ENCODE measurements at regions of chr16 and their contacts with region 1.

Region 1: DNA sequence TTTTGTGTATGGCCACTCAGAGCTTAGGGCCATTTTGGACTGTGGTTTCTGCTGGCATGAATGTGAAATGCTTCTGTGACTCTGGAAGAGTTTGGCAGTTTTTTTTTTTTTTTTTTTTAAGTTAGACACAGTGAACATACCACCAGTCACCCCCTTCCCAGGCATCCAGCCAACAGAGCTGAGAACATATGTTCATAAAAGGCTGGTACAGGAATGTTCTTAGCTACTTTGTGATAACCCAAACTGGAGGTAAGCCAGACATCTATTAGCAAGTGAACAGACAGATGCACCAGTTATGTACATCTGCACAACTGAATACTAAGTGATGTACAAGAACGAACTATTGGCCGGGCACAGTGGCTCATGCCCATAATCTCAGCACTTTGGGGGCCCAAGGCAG is 92.7 kb downstream of the ABCC1 start:
- DNase-seq: no peak
- H3K4me3 ChIP-seq: no peak overlapping the region
- H3K27ac ChIP-seq: no peak overlapping the region
- H3K4me1 ChIP-seq: no peaks in the 10 kb centered on the region
- H3K27me3 ChIP-seq: no peaks in the 10 kb centered on the region
- CTCF ChIP-seq: no peak

Region 2: DNA sequence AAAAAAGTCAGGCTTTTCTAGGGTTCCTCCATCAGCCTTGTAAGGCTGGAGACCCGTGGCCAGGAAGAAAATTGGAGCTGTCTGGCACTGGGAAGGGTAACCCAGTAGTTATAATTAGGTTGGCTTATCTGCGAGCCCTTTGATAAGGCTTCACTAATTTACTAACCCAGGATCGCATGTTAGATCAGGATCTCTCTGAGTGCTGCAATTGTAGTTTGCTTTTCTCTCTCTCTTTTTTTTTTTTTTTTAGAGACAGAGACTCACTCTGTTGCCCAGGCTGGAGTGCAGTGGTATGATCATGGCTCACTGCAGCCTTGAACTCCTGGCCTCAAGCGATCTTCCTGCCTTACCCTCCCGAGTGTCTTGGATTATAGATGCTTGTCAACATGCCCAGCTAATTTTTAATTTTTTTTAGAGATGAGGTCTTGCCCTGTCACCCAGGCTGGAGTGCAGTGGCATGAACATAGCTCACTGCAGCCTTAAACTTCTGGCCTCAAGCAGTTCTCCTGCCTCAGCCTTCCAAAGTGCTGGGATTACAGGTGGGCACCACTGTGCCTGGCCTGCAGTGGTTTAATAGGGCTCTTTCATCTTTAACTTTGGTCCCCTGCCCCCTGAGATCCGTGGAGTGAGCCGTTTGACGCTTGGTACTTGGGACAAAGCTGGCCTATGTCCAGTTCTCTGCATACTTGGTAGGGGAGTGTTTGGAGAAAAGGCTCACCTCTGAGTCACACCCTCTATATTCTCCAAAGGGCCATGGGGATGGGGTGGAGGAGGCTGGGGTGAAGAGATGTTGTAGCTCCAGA is 75.5 kb before region 1 on chr16:
- CTCF ChIA-PET with region 1: no interaction called
- dilution Hi-C with region 1: no loop called
- in situ Hi-C with region 1: no loop called
- intact Hi-C with region 1: no loop called
- DNase-seq: peak; percentile 85
- H3K4me3 ChIP-seq: no peak overlapping the region
- H3K27ac ChIP-seq: peak overlapping the region; percentile 78
- H3K4me1 ChIP-seq: peaks cover 29% of the 10 kb centered on the region
- H3K27me3 ChIP-seq: no peaks in the 10 kb centered on the region
- CTCF ChIP-seq: no peak

Region 3: DNA sequence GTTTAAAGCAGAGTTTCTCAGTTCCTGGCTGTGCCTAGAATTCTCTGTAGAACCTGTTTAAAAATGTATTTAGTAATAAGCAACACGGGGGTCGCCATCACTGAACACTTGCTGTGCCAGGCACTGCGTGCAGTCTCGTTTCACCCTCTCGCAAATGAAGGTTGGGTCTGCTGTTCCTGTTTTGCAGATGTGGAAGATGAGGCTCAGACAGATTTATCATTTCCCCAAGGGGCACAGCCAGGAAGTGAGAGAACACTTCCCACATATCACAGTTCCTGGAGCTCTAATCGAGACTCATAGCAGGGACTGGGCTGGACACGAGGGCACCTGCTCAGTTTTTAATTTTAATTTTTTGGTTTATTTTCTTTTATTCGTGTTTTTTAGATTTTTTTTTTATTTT is 58.6 kb after region 1 on chr16:
- CTCF ChIA-PET with region 1: interaction called, 3 read pairs
- dilution Hi-C with region 1: no loop called
- in situ Hi-C with region 1: no loop called
- intact Hi-C with region 1: loop called (anchors 10 kb)
- DNase-seq: no peak
- H3K4me3 ChIP-seq: no peak overlapping the region
- H3K27ac ChIP-seq: no peak overlapping the region
- H3K4me1 ChIP-seq: no peaks in the 10 kb centered on the region
- H3K27me3 ChIP-seq: no peaks in the 10 kb centered on the region
- CTCF ChIP-seq: no peak

Measured in mammary epithelial cell (primary cell).